ENCODE measurements at regions of chr6 and their contacts with region 1.

Region 1: GRCh38 chr6:42771741-42772100 is 10.1 kb upstream of the BICRAL start:
- DNase-seq: no peak
- H3K4me3 Mint-ChIP-seq: peak overlapping the region; percentile 74
- H3K27ac Mint-ChIP-seq: peak overlapping the region; percentile 100
- H3K4me1 Mint-ChIP-seq: peaks cover 55% of the 10 kb centered on the region
- H3K27me3 Mint-ChIP-seq: no peaks in the 10 kb centered on the region

Region 2: DNA sequence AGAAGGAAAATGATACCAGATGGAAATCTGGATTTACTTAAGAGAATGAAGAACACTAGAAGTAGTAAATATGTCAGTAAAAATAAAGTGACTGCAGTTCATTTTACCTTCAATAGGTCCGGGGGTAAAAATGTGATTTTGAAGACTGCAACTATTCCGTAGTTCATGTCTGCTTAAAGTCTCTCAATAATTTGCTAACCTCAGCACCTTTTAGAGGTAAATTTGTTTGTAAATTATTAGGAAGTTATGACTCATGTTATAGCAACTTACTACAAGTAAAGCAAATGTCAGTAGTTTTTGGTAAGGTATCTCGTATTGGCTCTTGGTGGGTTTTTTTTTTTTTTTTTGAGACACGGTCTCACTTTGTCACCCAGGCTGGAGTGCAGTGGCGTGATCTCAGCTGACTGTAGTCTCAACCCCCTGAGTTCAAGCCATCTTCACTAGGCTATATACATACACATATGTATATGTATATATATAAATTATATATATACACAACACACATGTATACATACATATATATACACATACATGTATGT is 42.3 kb after region 1 on chr6:
- intact Hi-C with region 1: loop called (anchors 5 kb)
- DNase-seq: no peak
- H3K4me3 Mint-ChIP-seq: no peak overlapping the region
- H3K27ac Mint-ChIP-seq: no peak overlapping the region
- H3K4me1 Mint-ChIP-seq: peaks cover 7% of the 10 kb centered on the region
- H3K27me3 Mint-ChIP-seq: no peaks in the 10 kb centered on the region

Region 3: GRCh38 chr6:42984001-42984923 is 212.5 kb after region 1 on chr6 and contains the start of gene PPP2R5D:
- intact Hi-C with region 1: loop called (anchors 2 kb)
- DNase-seq: peak; percentile 97
- H3K4me3 Mint-ChIP-seq: peak within 1 kb of the TSS; percentile 92
- H3K27ac Mint-ChIP-seq: peak within 1 kb of the TSS; percentile 94
- H3K4me1 Mint-ChIP-seq: peaks cover 57% of the 10 kb centered on the region
- H3K27me3 Mint-ChIP-seq: no peaks in the 10 kb centered on the region
- total RNA-seq, gene PPP2R5D: 52.1 and 53.4 TPM in 2 replicates